Activated CD4-positive, alpha-beta memory T cell treated with anti-CD3 and anti-CD28 coated beads, Interleukin-2, amount 10 ng/mL, durations not matched to agents 7 days and 5 days (primary cell): ENCODE measurements at regions of chr13 and their contacts with region 1.

Region 1: DNA sequence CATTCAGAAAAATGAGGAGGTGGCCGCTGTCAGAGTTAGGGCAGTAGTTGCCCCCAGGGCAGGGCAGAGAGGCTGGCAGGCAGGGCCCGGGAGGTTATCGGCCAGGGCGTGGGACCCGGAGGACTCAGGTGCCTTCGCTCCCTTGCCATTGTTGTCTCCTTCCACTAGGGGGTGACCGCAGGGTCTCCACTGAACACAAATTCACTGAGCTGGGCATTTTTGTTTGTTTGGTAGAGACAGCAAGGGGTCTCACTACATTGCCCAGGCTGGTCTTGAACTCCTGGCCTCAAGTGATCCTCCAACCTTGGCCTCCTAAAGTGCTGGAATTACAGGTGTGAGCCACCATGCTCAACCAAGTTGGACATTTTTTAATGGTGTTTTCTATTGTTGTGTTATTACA is 25.1 kb downstream of the CARS2 start:
- DNase-seq: no peak
- H3K4me3 Mint-ChIP-seq: no peak overlapping the region
- H3K27ac Mint-ChIP-seq: no peak overlapping the region
- H3K4me1 Mint-ChIP-seq: peaks cover 10% of the 10 kb centered on the region
- H3K27me3 Mint-ChIP-seq: no peaks in the 10 kb centered on the region

Region 2: GRCh38 chr13:110705826-110706569 is 25.1 kb after region 1 on chr13 and contains the start of gene CARS2:
- CTCF ChIA-PET with region 1: interaction called, 11 read pairs
- POLR2A ChIA-PET with region 1: interaction called, 3 read pairs
- DNase-seq: peak; percentile 95
- H3K4me3 Mint-ChIP-seq: peak within 1 kb of the TSS; percentile 93
- H3K27ac Mint-ChIP-seq: peak within 1 kb of the TSS; percentile 86
- H3K4me1 Mint-ChIP-seq: peaks cover 45% of the 10 kb centered on the region
- H3K27me3 Mint-ChIP-seq: no peaks in the 10 kb centered on the region
- total RNA-seq, gene CARS2: 51.8 to 53.5 TPM

Region 3: DNA sequence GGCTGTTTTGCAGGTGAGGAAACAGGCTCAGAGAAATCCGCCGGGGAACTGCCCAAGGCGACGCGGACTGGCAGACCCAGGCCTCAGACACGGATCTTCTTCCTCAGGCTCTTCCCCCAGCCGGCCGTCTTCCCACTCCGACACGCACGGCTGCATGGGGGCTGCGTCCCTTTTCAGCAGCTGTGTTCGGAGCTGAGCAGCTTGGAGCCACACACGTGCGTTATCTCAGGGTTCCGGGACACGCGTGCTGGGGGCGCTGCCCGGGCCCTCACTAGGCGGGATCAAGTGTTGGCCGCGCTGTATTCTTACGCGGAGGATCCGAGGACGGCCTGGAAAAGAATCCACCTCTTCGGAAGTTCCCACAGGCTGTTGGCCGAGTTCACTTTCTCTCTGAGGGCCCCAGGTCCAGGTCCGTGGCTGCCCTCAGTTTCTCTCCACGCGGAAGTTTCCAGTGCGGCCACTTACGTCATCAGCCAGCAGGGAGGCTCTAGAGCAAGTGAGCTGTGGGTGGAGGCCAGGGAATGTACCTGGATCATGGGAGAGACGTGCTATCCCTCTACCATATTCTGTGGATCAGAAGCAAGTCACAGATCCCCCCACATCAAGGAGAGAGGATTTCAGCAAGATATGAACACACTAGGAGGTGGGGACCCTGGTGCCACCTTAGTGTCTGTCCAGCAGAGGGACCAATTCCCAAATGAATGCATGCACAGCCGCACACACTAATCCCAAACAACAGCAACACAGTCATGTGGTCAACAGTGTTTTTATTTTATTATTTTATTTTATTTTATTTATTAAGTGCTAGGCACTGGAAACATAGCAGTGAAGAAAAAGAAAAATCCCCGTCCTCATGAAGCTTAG is 133.1 kb after region 1 on chr13:
- CTCF ChIA-PET with region 1: interaction called, 35 read pairs
- POLR2A ChIA-PET with region 1: no interaction called
- DNase-seq: no peak
- H3K4me3 Mint-ChIP-seq: no peak overlapping the region
- H3K27ac Mint-ChIP-seq: no peak overlapping the region
- H3K4me1 Mint-ChIP-seq: peaks cover 6% of the 10 kb centered on the region
- H3K27me3 Mint-ChIP-seq: peaks cover 31% of the 10 kb centered on the region

Region 4: DNA sequence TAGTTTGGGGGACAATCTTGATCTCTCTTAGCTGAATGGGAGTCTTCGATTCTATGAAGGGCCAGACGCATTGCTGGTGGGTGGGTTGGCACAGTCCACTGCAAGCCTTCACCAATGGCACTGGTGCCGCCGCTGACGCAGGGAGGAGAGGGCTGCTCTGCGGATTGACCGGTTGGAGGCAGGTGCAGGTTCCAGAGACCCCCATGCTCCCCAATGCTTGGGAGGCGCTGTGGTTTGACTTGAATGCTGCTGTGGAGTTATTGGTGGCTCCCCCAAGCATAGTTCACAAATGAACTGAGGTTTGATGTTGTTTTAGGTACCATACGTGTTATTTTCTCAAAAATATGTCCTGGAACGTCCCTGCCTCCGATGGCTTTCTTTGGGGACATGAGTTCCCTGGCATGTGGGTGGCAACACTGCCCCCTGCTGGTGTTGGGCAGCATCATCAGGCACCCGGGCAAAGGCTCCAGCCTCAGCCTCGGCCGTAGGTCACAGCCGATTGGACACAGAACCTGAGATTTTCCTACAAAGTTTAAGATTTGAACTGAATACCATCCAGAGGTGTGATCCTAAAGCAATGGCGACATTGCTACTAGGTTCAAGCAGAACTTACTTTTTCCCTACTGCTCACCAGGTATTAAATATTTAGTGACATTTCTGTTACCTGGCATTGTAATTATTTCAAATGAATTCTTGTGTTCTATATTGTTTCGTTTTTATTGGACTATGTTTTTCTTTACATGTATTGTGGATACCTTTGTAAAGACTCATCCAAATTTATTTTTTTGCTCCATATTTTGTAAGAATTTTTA is 138.6 kb after region 1 on chr13:
- CTCF ChIA-PET with region 1: interaction called, 35 read pairs
- POLR2A ChIA-PET with region 1: interaction called, 3 read pairs
- DNase-seq: peak; percentile 80
- H3K4me3 Mint-ChIP-seq: no peak overlapping the region
- H3K27ac Mint-ChIP-seq: no peak overlapping the region
- H3K4me1 Mint-ChIP-seq: peaks cover 5% of the 10 kb centered on the region
- H3K27me3 Mint-ChIP-seq: peaks cover 1% of the 10 kb centered on the region